ENCODE measurements at regions of chr12 and their contacts with region 1.

Region 1: DNA sequence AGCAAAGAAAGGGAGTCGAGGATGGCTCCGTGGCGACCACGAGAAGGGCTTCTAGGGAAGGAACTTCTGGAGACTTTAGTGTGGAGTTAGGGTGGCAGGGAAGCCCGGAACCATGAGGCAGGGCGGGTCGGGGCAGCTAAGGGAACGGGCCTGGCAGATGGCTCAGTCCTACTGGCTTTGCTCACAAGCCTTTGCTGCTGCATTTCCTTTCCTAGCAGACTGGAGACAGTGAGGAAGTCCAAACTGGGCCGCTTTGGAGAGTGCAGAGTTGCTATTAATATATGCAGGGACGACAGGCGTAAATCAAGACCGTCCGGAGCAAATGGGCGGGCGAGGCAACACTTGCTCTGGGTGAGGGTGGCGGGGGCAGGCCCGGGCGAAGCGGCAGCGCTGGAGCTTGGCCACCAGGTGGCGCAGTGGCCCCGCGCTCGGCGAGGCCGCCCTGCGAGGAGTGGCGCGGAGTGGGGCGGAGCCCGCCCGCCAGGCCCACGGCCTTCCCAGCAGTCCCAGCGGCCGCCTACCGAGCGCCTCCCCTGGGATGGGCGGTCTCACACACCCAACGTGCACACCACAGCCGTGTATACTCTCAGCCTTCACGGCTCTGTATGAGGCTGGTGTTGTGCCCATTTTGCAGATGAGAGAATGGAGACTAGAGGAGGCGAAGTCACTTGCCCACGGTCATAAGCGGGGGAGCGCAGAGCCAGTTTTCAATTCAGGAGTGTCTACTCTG is 24.4 kb upstream of the LRTM2 start:
- DNase-seq: peak; percentile 73
- ATAC-seq: peak; percentile 96
- H3K4me3 ChIP-seq: peak overlapping the region; percentile 62
- H3K27ac ChIP-seq: peak overlapping the region; percentile 62
- H3K4me1 ChIP-seq: peaks cover 7% of the 10 kb centered on the region
- H3K27me3 ChIP-seq: no peaks in the 10 kb centered on the region
- CTCF ChIP-seq: peak; percentile 81 to 97 (median 92); a peak in 5 of 6 replicates
- EP300 ChIP-seq: no peak
- POLR2A ChIP-seq: peak; percentile 90
- RAD21 ChIP-seq: peak; percentile 78

Region 2: GRCh38 chr12:1634590-1635191 is 161.3 kb before region 1 on chr12:
- CTCF ChIA-PET with region 1: interaction called, 112 read pairs
- POLR2A ChIA-PET with region 1: interaction called, 5 read pairs
- RAD21 ChIA-PET with region 1: interaction called, 44 read pairs
- SMC1A ChIA-PET with region 1: interaction called, 56 read pairs
- in situ Hi-C with region 1: no loop called
- intact Hi-C with region 1: loop called (anchors 5 kb)
- DNase-seq: no peak
- ATAC-seq: peak; percentile 82
- H3K4me3 ChIP-seq: no peak overlapping the region
- H3K27ac ChIP-seq: no peak overlapping the region
- H3K4me1 ChIP-seq: 0 out of 2 replicates have a peak, but pooled peaks cover 6% of the 10 kb centered on the region
- H3K27me3 ChIP-seq: peaks cover 2 to 4% of the 10 kb centered on the region in 2 experiments; a peak in 2 of 4 replicates
- CTCF ChIP-seq: peak; percentile 79 to 83 (median 82)
- EP300 ChIP-seq: no peak
- POLR2A ChIP-seq: no peak
- RAD21 ChIP-seq: peak; percentile 72

Region 3: GRCh38 chr12:1668833-1669543 is 127.0 kb before region 1 on chr12:
- CTCF ChIA-PET with region 1: interaction called, 12 read pairs
- POLR2A ChIA-PET with region 1: interaction called, 3 read pairs
- RAD21 ChIA-PET with region 1: interaction called, 5 read pairs
- SMC1A ChIA-PET with region 1: interaction called, 4 read pairs
- in situ Hi-C with region 1: no loop called
- intact Hi-C with region 1: no loop called
- DNase-seq: no peak
- ATAC-seq: no peak
- H3K4me3 ChIP-seq: no peak overlapping the region
- H3K27ac ChIP-seq: no peak overlapping the region
- H3K4me1 ChIP-seq: peaks cover 7% of the 10 kb centered on the region
- H3K27me3 ChIP-seq: no peaks in the 10 kb centered on the region
- CTCF ChIP-seq: no peak
- EP300 ChIP-seq: no peak
- POLR2A ChIP-seq: no peak
- RAD21 ChIP-seq: no peak

Region 4: DNA sequence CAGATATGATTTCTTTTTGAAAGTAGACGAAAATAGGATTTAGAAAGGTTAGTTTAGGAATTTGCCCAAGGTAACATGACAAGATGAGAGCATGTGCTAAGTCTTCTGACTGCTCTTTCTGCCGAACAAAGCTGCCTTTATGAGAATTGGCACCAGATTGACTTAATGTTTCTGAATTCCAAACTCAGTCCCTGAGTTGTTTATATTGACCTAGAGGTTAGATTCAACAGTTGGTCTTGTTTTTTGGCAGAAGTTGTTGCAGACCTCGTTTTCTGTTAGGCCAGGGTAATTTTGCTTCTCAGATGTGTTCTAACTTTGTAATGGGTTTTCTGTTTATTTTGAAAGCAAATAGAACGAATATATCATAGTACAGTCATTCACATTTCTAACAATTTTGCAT is 37.1 kb before region 1 on chr12:
- CTCF ChIA-PET with region 1: no interaction called
- POLR2A ChIA-PET with region 1: no interaction called
- RAD21 ChIA-PET with region 1: no interaction called
- SMC1A ChIA-PET with region 1: no interaction called
- in situ Hi-C with region 1: no loop called
- intact Hi-C with region 1: no loop called
- DNase-seq: no peak
- ATAC-seq: no peak
- H3K4me3 ChIP-seq: no peak overlapping the region
- H3K27ac ChIP-seq: no peak overlapping the region
- H3K4me1 ChIP-seq: no peaks in the 10 kb centered on the region
- H3K27me3 ChIP-seq: no peaks in the 10 kb centered on the region
- CTCF ChIP-seq: no peak
- EP300 ChIP-seq: no peak
- POLR2A ChIP-seq: no peak
- RAD21 ChIP-seq: no peak

Region 5: DNA sequence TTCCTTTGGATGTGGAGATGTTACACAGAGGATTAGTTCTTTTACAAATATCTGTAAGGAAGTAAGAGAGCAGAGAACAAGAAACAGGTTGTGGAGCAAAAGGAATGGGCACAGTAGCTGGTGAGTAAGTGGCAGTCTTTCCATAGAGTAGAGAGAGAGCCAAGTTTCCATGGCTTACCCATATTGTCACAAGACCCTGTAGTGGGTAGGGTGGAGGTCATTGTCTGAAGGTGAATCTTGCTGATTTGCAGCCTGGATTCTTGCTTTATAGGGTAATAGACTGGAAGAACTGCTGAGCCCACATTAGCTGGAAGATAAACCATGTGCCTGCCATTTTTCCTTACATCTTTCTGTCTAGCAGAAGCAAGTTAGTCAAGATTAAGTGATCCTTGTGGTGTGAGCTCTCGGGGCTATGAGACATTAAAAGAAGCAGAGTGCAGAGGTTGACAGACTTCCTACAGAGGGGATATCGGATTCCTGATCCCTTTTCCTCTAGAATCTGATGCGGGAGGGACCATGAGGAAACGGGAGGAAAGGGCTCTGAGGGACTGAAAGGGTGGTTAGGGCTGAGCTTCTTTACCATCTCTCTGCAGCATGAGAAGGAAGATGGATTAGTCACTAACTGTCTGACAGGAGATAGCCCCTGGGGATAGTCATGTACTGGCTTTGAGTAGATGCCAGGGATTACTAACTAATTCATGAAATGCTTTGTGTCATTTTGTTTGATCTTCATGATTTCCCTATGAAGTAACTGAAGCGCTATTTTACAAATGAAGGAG is 19.6 kb before region 1 on chr12:
- CTCF ChIA-PET with region 1: interaction called, 21 read pairs
- POLR2A ChIA-PET with region 1: no interaction called
- RAD21 ChIA-PET with region 1: interaction called, 5 read pairs
- SMC1A ChIA-PET with region 1: interaction called, 11 read pairs
- in situ Hi-C with region 1: no loop called
- intact Hi-C with region 1: no loop called
- DNase-seq: no peak
- ATAC-seq: no peak
- H3K4me3 ChIP-seq: no peak overlapping the region
- H3K27ac ChIP-seq: no peak overlapping the region
- H3K4me1 ChIP-seq: no peaks in the 10 kb centered on the region
- H3K27me3 ChIP-seq: no peaks in the 10 kb centered on the region
- CTCF ChIP-seq: no peak
- EP300 ChIP-seq: no peak
- POLR2A ChIP-seq: no peak
- RAD21 ChIP-seq: no peak

Region 6: DNA sequence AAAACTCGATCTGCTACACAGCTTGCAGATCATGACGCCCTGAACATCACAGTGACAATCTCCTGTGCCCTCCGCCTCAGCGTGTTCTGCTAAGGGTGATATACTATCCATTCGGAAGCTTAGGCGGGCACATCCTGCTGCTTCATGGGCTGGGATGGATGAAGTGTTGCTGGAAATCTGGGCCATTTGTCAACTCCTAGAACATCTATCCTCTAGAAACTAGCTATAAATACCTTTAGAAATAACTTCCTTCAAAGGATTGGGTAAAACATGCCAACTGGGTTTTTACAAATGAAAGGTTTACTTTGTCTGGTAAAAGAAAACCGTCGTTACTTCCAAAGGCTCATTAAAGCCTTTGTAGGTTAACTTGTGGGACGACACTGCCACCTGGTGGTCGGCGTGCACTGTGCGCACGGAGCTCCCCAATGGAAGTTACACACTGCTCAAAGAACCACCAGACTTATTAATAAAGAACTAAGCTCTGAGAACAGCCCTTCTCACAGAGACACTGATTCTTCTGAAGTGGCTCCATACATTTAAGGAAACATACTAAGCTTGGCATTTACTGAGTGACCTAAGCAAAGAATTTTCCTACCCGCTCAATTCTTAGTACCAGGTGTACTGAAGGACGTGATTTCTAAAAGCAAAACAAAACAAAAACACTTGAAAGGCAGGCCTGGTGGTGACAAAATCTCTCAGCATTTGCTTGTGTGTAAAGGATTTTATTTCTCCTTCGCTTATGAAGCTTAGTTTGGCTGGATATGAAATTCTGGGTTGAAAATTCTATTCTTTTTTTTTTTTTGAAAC is 144.1 kb after region 1 on chr12:
- CTCF ChIA-PET with region 1: interaction called, 106 read pairs
- POLR2A ChIA-PET with region 1: interaction called, 6 read pairs
- RAD21 ChIA-PET with region 1: interaction called, 69 read pairs
- SMC1A ChIA-PET with region 1: interaction called, 109 read pairs
- in situ Hi-C with region 1: loop called (anchors 5 kb)
- intact Hi-C with region 1: loop called (anchors 1 kb)
- DNase-seq: peak; percentile 45
- ATAC-seq: peak; percentile 99
- H3K4me3 ChIP-seq: no peak overlapping the region
- H3K27ac ChIP-seq: no peak overlapping the region
- H3K4me1 ChIP-seq: no peaks in the 10 kb centered on the region
- H3K27me3 ChIP-seq: no peaks in the 10 kb centered on the region
- CTCF ChIP-seq: peak; percentile 87 to 93 (median 92); a peak in 5 of 6 replicates
- EP300 ChIP-seq: no peak
- POLR2A ChIP-seq: no peak
- RAD21 ChIP-seq: peak; percentile 94

Region 7: DNA sequence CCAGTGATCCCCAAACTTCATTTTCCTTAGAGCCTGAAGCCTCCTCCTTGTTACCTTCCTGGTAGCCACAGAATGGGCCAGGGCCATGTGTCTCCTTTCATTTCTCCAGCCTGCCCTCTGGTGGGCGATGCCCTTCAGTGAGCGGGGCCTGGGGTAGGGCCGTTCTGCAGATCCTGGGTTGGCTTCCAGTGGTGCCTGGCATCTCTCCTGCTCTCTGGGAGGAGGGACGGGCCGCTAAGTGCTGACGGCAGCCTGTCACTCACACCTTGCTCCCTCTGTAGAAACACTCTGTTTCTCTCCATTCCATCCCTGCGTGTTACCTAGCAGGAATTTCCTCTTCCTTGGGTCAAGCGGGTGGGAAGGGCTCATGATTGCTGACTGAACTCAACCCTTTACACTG is 488.9 kb after region 1 on chr12:
- CTCF ChIA-PET with region 1: no interaction called
- POLR2A ChIA-PET with region 1: no interaction called
- RAD21 ChIA-PET with region 1: no interaction called
- SMC1A ChIA-PET with region 1: no interaction called
- in situ Hi-C with region 1: no loop called
- intact Hi-C with region 1: loop called (anchors 10 kb)
- DNase-seq: no peak
- ATAC-seq: peak; percentile 98
- H3K4me3 ChIP-seq: no peak overlapping the region
- H3K27ac ChIP-seq: no peak overlapping the region
- H3K4me1 ChIP-seq: no peaks in the 10 kb centered on the region
- H3K27me3 ChIP-seq: no peaks in the 10 kb centered on the region; a peak in 1 of 4 replicates
- CTCF ChIP-seq: peak; percentile 53 to 74 (median 61)
- EP300 ChIP-seq: no peak
- POLR2A ChIP-seq: no peak
- RAD21 ChIP-seq: peak; percentile 42

Measured in GM12878 (cell line).